Left ventricle myocardium superior (tissue), 1 donor: ENCODE measurements at regions of chrX and their contacts with region 1.

Region 1: DNA sequence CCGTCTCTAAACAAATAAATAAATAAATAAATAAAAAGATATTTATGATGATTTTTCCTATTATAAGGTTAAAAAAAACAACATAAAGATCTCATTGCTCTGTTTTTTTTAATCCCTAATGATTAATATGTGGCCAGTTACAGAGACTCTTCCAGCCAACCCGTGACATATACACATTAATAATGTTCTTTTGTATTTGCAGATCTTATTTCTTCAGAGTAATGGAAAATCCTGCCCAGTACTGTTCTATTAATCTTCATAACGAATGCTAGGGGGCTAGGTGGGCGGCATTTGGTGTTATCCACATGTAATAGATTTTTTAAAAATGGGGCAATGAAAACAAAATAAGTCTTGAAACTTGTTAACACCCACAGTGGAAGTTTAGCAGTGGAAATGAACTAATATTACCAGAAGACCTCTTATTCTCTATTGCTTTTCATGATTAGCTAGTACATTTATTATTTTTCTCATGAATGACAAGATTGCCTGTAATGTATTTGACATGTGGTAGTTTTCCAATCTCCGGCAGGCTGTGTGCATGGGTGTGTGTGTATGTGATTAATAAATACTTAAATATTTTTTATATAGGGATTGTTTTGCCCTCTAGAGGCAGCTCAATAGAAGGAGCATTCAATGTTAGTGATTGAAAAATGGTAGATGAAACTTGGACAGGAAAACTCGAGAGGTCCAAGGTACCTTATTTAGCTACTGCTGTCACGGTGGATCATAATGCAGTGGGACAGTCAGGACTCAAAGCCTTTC is 457.4 kb downstream of the IL1RAPL1 start:
- DNase-seq: no peak
- ATAC-seq: peak; percentile 20

Region 2: GRCh38 chrX:28586981-28587551 is 457.5 kb before region 1 on chrX and contains the start of gene IL1RAPL1:
- intact Hi-C with region 1: loop called (anchors 10 kb)
- DNase-seq: no peak
- ATAC-seq: peak; percentile 89
- total RNA-seq, gene IL1RAPL1: 4.7 TPM